ENCODE measurements at regions of chr6 and their contacts with region 1.

Region 1: DNA sequence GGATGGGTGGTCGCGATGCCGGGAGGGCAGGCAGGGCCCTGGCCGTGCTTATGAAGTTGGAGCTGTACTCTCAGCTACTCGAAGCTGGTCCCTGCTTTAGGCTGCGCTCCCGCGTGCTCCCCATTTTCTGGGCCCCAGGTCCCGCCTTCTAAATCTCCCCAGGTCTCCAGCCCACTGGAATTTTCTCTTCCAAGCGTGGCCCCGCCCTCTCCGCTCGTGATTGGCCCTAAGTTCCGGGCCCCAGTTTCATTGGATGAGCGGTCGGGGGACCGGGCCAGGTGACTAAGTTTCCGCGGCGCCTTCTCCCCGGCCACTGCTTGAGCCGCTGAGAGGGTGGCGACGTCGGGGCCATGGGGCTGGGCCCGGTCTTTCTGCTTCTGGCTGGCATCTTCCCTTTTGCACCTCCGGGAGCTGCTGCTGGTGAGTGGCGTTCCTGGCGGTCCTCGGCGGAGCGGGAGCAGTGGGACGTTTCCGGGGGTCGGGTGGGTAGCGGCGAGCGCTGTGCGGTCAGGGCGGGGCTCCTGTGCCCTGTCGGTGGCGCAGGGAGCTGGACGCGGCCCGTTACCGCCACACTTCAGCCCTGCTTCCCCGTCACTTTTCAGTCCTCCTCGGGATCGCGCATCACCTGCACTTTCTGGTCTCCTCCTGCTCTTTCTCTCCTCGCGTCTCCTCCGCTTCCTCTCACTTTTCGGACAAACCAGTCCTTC is at the start of gene MICA:
- DNase-seq: peak; percentile 61
- H3K4me3 Mint-ChIP-seq: peak within 1 kb of the TSS; percentile 75
- H3K27ac Mint-ChIP-seq: peak within 1 kb of the TSS; percentile 14
- H3K4me1 Mint-ChIP-seq: peaks cover 56% of the 10 kb centered on the region
- H3K27me3 Mint-ChIP-seq: peaks cover 26% of the 10 kb centered on the region
- total RNA-seq, gene MICA: 5.6 and 6.0 TPM in 2 replicates

Region 2: DNA sequence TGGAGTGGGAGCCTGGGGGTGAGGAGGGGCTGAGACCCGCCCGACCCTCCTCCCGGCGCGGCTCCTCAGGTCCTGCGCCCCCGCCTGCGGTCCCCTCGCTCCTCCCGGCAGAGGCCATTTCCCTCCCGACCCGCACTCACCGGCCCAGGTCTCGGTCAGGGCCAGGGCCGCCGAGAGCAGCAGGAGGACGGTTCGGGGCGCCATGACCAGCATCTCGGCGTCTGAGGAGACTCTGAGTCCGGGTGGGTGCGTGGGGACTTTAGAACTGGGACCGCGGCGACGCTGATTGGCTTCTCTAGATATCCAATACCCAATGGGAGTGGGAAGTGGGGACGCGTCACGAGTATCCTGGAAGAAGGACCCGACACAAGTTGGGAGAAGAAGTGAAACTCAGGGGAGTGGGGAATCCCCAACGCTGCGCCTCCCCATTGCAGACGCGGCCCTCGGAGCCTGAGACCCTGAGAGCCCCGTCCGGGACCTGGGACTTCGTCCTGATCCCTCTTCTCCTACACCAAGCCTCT is 46.4 kb before region 1 on chr6 and contains the start of gene HLA-B:
- intact Hi-C with region 1: no loop called
- DNase-seq: peak; percentile 55
- H3K4me3 Mint-ChIP-seq: peak within 1 kb of the TSS; percentile 93
- H3K27ac Mint-ChIP-seq: peak within 1 kb of the TSS; percentile 96
- H3K4me1 Mint-ChIP-seq: peaks cover 45% of the 10 kb centered on the region
- H3K27me3 Mint-ChIP-seq: peaks cover 15% of the 10 kb centered on the region
- total RNA-seq, gene HLA-B: 3,580 and 3,693 TPM in 2 replicates

Region 3: DNA sequence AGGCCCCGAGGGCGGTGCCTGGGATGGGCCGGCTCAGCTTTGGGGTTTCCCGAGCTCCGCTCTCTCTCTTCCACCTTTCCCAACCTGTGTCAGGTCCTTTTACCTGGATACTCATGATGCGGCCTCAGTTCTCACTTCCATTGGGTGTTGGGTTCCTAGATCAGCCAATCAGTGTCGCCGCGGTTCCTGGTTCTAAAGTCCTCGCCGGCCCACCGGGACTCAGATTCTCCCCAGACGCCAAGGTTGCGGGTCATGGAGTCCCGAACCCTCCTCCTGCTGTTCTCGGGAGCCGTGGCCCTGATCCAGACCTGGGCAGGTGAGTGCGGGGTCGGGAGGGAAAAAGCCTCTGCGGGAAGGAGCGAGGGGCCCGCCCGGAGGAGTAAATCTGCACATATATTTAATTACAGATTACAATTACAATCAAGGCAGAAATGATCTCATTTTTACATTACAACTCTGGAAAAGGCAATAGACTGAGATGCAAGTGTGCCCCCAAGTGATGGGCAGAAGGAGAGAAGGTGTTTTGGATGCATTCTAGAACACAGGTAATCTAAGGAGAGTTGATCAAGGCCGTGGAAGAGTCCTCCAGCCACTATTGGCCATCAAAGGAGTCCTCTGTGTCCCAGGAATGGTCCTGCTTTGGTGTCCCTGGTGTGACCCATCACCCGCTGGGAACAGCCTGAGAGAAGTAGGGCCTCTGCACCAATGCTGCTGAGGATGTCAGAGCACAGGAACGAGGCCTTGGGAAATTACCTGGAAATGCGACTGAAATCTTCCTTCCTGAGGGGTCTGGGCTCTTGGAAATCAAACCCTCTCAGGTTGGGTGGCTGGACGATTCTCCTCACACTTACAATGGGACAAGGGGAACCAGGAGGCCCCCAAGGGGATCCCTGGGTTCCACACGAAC is 59.8 kb after region 1 on chr6:
- intact Hi-C with region 1: loop called (anchors 1 kb)
- DNase-seq: peak; percentile 85
- H3K4me3 Mint-ChIP-seq: peak overlapping the region; percentile 100
- H3K27ac Mint-ChIP-seq: peak overlapping the region; percentile 90
- H3K4me1 Mint-ChIP-seq: peaks cover 52% of the 10 kb centered on the region
- H3K27me3 Mint-ChIP-seq: peaks cover 9% of the 10 kb centered on the region

Region 4: DNA sequence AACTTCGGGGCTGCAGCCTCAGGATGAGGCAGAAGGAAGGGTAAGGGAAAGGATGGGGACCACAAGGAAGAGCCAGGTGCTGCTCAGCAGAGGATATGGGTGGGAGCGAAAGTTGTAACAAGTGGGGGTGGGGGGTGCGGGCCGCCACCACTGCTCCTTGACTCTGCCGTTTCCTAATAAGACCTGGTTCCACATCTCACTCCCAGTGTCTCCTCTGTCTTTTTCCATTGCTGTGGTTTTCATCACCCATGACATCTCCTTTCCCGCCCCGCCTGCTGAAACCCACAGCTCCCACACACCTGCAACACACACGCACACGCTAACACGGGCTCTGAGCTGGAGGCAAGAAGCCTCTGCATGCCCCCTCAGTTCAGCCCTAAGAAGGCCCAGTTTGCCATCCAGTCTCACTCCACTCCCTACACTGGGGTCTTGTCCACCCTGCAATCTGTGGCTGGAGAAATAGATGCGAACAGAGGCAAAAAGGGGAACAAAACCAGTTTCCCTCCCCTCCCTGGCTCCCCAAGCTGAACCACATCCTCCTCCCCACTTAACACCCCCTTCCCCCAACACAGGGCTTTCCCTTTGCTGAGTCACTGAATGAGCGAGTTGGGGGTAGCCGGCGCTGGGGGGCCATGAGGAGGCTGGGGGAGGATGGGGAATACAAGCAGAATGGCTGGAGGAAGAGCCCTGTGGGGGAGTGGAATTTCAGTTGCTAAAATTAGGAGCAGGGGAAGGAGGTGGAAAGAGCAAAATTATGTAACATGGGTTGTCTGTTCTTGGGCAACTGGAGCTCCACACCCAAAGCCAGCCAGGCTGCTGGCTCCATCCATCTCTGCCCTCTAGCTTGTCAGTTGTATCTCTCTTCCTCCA is 155.4 kb after region 1 on chr6:
- intact Hi-C with region 1: no loop called
- DNase-seq: no peak
- H3K4me3 Mint-ChIP-seq: peak overlapping the region; percentile 51
- H3K27ac Mint-ChIP-seq: peak overlapping the region; percentile 51
- H3K4me1 Mint-ChIP-seq: peaks cover 60% of the 10 kb centered on the region
- H3K27me3 Mint-ChIP-seq: peaks cover 5% of the 10 kb centered on the region

Measured in activated T-helper 2 cell treated with anti-CD3 and anti-CD28 coated beads, Interferon-gamma antibody, Interleukin-2, Interleukin-4, amounts not matched to agents 10 μg/mL and 5 μg/mL and 100 μg/mL, durations not matched to agents 14 hours and 24 hours and 36 hours (primary cell).